Naive thymus-derived CD4-positive, alpha-beta T cell (primary cell): ENCODE measurements at regions of chr10 and their contacts with region 1.

Region 1: DNA sequence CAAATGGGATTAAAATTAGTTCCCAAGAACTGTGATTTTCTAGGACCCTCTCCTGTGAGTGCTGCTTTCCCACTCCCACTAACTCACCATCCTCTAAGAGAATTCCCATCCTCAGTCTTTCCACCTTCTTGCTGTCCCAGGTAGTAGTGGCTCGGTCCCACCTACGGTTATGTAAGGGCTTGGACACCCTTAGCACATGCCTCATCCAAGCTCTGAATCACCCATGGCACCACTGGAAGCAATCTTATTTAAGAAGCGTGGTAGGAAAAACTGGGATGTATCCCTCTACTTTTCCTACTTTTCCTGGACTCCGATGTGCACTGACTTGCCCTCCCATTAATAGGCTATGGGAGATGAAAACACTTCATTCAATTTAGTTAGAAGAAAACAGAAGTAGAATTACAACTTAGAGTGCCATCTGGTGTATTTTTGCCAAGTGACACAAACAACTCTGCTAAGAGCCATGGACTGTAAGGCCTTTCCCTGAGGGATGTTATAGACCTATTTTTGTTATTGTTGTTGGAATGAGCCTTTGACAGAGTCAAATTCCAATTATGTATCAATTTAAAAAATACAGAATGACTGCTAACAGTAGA is 13.7 kb upstream of the ANKRD22 start:
- DNase-seq: no peak
- ATAC-seq: no peak
- H3K4me3 ChIP-seq: no peak overlapping the region
- H3K4me3 Mint-ChIP-seq: no peak overlapping the region
- H3K27ac ChIP-seq: no peak overlapping the region
- H3K27ac Mint-ChIP-seq: no peak overlapping the region
- H3K4me1 ChIP-seq: no peaks in the 10 kb centered on the region
- H3K4me1 Mint-ChIP-seq: peaks cover 0 to 10% (median 0%) of the 10 kb centered on the region in 7 donors
- H3K27me3 ChIP-seq: no peaks in the 10 kb centered on the region
- H3K27me3 Mint-ChIP-seq: peaks cover 0 to 37% (median 14%) of the 10 kb centered on the region in 5 donors

Region 2: DNA sequence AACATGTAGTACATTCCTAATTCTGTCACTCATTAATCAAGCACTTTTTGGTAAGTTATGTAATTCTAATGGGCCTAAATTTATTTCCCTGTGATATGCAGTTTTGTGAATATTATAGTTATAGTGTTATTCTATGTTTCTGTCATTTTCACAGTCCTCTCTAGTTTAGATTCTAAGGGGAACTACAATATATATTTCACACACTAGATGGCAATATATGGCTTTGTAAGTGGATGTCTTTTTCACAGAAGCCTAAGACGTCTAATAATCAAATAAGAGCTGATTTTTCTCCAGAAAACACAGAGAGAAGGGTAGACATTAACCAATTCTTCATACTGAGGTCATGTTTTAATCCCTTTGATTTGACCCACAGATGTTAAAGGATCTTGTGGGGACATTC is 300.3 kb before region 1 on chr10:
- CTCF ChIA-PET with region 1: no interaction called
- POLR2A ChIA-PET with region 1: no interaction called
- intact Hi-C with region 1: loop called in 1 of 2 experiments (anchors 1 kb)
- DNase-seq: peak in 4 of 9 donors; percentile 5 to 29 (median 12)
- ATAC-seq: peak; percentile 54
- H3K4me3 ChIP-seq: no peak overlapping the region
- H3K4me3 Mint-ChIP-seq: no peak overlapping the region
- H3K27ac ChIP-seq: no peak overlapping the region
- H3K27ac Mint-ChIP-seq: no peak overlapping the region
- H3K4me1 ChIP-seq: no peaks in the 10 kb centered on the region
- H3K4me1 Mint-ChIP-seq: peaks cover 0 to 4% (median under 1%) of the 10 kb centered on the region in 7 donors
- H3K27me3 ChIP-seq: no peaks in the 10 kb centered on the region
- H3K27me3 Mint-ChIP-seq: peaks cover 0 to 23% (median 0%) of the 10 kb centered on the region in 5 donors

Region 3: GRCh38 chr10:88687853-88688467 is 177.4 kb before region 1 on chr10:
- CTCF ChIA-PET with region 1: interaction called, 4 read pairs
- POLR2A ChIA-PET with region 1: no interaction called
- intact Hi-C with region 1: loop called (anchors 1 to 10 kb)
- DNase-seq: peak in 5 of 9 donors; percentile 7 to 38 (median 18)
- ATAC-seq: peak; percentile 70
- H3K4me3 ChIP-seq: no peak overlapping the region
- H3K4me3 Mint-ChIP-seq: no peak overlapping the region
- H3K27ac ChIP-seq: no peak overlapping the region
- H3K27ac Mint-ChIP-seq: no peak overlapping the region
- H3K4me1 ChIP-seq: no peaks in the 10 kb centered on the region
- H3K4me1 Mint-ChIP-seq: no peaks in the 10 kb centered on the region
- H3K27me3 ChIP-seq: no peaks in the 10 kb centered on the region
- H3K27me3 Mint-ChIP-seq: peaks cover 7 to 30% (median 7%) of the 10 kb centered on the region in 5 donors

Region 4: GRCh38 chr10:88835096-88835909 is 30.1 kb before region 1 on chr10:
- CTCF ChIA-PET with region 1: interaction called, 4 read pairs
- POLR2A ChIA-PET with region 1: no interaction called
- intact Hi-C with region 1: loop called (anchors 1 to 2 kb)
- DNase-seq: peak; percentile 65 to 86 (median 82)
- ATAC-seq: peak; percentile 95
- H3K4me3 ChIP-seq: no peak overlapping the region
- H3K4me3 Mint-ChIP-seq: no peak overlapping the region
- H3K27ac ChIP-seq: no peak overlapping the region
- H3K27ac Mint-ChIP-seq: no peak overlapping the region
- H3K4me1 ChIP-seq: peaks cover 14 to 46% of the 10 kb centered on the region in 2 donors
- H3K4me1 Mint-ChIP-seq: peaks cover 10 to 33% (median 32%) of the 10 kb centered on the region in 7 donors
- H3K27me3 ChIP-seq: no peaks in the 10 kb centered on the region
- H3K27me3 Mint-ChIP-seq: no peaks in the 10 kb centered on the region

Region 5: GRCh38 chr10:88888810-88889445 is 23.5 kb after region 1 on chr10:
- CTCF ChIA-PET with region 1: no interaction called
- POLR2A ChIA-PET with region 1: no interaction called
- intact Hi-C with region 1: no loop called
- DNase-seq: no peak
- ATAC-seq: no peak
- H3K4me3 ChIP-seq: no peak overlapping the region
- H3K4me3 Mint-ChIP-seq: no peak overlapping the region
- H3K27ac ChIP-seq: no peak overlapping the region
- H3K27ac Mint-ChIP-seq: no peak overlapping the region
- H3K4me1 ChIP-seq: peaks cover 18 to 45% of the 10 kb centered on the region in 2 donors
- H3K4me1 Mint-ChIP-seq: peaks cover 33 to 90% (median 81%) of the 10 kb centered on the region in 7 donors
- H3K27me3 ChIP-seq: no peaks in the 10 kb centered on the region
- H3K27me3 Mint-ChIP-seq: no peaks in the 10 kb centered on the region

Region 6: GRCh38 chr10:88901206-88901983 is 36.0 kb after region 1 on chr10:
- CTCF ChIA-PET with region 1: no interaction called
- POLR2A ChIA-PET with region 1: no interaction called
- intact Hi-C with region 1: loop called in 1 of 2 experiments (anchors 5 kb)
- DNase-seq: no peak
- ATAC-seq: peak; percentile 84
- H3K4me3 ChIP-seq: no peak overlapping the region
- H3K4me3 Mint-ChIP-seq: peak overlapping the region in 1 of 10 donors; percentile 34
- H3K27ac ChIP-seq: no peak overlapping the region
- H3K27ac Mint-ChIP-seq: peak overlapping the region in 4 of 9 donors; percentile 43 to 60 (median 53)
- H3K4me1 ChIP-seq: peaks cover 15 to 24% of the 10 kb centered on the region in 2 donors
- H3K4me1 Mint-ChIP-seq: peaks cover 23 to 58% (median 40%) of the 10 kb centered on the region in 7 donors
- H3K27me3 ChIP-seq: no peaks in the 10 kb centered on the region
- H3K27me3 Mint-ChIP-seq: no peaks in the 10 kb centered on the region